IMR-90 (cell line): ENCODE measurements at regions of chr15 and their contacts with region 1.

Region 1: DNA sequence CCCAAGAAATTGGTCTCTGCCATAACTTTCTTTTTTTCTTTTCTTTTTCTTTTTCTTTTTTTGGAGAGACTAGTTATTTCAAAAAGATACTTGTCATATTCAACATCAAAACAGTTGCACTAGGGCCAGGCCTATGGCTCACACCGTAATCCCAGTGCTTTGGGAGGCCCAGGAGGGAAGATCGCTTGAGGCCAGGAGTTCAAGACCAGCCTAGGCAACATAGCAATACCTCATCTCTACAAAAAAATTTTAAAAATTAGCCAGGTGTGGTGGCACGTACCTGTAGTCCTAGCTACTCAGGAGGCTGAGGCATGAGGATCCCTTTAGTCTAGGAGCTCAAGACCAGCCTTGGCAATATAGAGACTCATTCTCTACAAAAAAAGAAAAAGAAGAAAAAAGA is 49.0 kb upstream of the GNB5 start:
- DNase-seq: no peak
- ATAC-seq: no peak
- H3K4me3 ChIP-seq: no peak overlapping the region
- H3K27ac ChIP-seq: no peak overlapping the region
- H3K4me1 ChIP-seq: 0 out of 2 replicates have a peak, but pooled peaks cover 3% of the 10 kb centered on the region
- H3K27me3 ChIP-seq: no peaks in the 10 kb centered on the region; the same call in 1 of the 2 replicates
- CTCF ChIP-seq: no peak
- POLR2A ChIP-seq: no peak
- RAD21 ChIP-seq: no peak

Region 2: DNA sequence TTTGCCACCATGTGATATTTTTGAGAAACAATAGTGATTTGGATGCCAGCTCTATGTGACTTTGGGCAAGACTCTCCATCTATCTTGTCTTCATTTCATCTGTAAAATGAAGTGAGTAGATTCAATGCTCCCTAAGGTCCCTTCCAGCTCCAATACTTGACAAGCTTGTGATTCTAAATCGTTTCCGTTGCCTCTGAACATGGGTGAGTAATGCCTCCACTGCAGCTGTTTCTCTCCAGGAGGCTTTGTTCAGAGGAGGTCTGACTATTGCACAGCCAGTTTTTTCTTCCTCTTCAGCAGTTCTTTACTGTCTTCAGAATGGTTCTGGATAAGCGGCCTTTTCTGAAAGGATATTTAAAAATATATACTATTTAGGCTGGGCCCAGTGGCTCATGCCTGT is 425.6 kb before region 1 on chr15:
- CTCF ChIA-PET with region 1: no interaction called
- POLR2A ChIA-PET with region 1: interaction called, 10 read pairs
- dilution Hi-C with region 1: no loop called
- in situ Hi-C with region 1: no loop called
- intact Hi-C with region 1: no loop called
- DNase-seq: no peak
- ATAC-seq: no peak
- H3K4me3 ChIP-seq: no peak overlapping the region
- H3K27ac ChIP-seq: no peak overlapping the region
- H3K4me1 ChIP-seq: peaks cover 1% of the 10 kb centered on the region; the same call in 1 of the 2 replicates
- H3K27me3 ChIP-seq: no peaks in the 10 kb centered on the region
- CTCF ChIP-seq: no peak
- POLR2A ChIP-seq: no peak
- RAD21 ChIP-seq: no peak